ENCODE measurements at regions of chr6 and their contacts with region 1.

Region 1: DNA sequence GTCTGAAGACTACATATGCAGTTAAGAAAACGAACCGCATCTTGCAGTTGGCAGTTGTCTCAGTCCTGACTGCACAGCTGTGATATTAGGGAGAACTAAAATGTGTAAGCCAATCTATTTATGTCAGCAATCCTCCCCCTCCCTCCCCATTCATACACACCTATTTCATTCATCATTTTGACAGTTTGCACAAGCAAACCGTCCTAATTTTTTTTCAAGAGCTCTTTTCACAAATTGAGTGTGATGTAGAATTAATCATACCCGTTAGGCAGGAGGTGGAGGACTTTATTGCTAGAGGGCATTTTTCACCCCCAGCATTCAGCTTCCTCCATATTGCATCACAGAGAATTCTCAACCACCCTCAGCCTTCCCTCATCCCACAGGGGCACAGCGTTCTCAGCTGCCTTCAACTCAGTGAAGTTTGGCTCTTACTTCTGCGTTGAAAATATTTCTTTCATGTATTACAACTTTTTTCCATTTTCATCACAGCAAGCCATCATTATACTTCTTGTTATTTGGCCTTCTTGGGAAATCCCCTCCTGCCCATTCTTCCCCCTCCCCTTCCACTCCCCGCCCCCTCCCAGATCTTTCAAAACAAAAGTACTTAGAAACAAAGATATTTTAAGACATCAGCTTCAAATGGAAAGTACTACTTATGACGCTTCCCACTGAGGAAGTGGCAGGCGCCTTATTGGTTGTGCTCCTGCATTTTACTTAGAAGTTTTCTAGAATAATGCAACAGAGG is 37.5 kb downstream of the NOX3 start:
- DNase-seq: peak; percentile 34
- ATAC-seq: peak; percentile 78
- H3K4me3 Mint-ChIP-seq: peak overlapping the region; percentile 80
- H3K27ac Mint-ChIP-seq: peak overlapping the region; percentile 94
- H3K4me1 Mint-ChIP-seq: peaks cover 22% of the 10 kb centered on the region
- H3K27me3 Mint-ChIP-seq: no peaks in the 10 kb centered on the region

Region 2: DNA sequence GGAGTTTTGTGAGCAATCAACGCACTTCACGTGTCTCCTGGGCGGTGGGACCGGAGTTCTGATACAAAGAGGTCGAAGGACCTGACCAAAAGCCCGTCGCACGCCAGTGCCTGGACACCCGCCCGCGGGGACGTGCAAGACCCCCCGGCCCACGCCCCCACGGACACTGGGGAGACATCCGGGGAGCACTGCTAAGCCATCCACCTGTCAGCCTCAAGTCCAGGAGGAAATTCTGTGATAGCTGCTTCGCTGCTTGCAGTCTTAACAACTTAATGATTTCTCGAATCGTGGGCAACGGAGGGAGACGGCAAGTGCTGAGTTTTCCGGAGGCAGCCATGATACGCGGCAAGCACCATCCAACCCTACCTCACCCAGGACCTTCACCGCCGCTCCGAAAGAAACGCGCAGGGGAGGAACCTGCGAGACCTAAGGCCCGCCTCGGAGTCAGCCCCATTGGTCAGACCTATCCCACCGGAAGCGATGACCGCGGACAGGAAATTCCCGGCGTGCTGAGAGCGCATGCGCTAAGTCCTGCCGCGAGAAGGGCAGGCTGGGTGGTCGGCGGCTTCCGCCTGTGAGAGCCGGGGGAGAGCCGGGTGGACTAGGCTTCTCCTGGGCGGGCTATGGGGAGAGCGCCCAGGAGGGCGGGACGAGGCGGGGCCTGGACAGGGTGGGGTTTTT is 104.0 kb before region 1 on chr6 and contains the start of gene TFB1M:
- POLR2A ChIA-PET with region 1: interaction called, 10 read pairs
- DNase-seq: peak; percentile 98
- ATAC-seq: peak; percentile 96
- H3K4me3 Mint-ChIP-seq: peak within 1 kb of the TSS; percentile 99
- H3K27ac Mint-ChIP-seq: peak within 1 kb of the TSS; percentile 97
- H3K4me1 Mint-ChIP-seq: peaks cover 35% of the 10 kb centered on the region
- H3K27me3 Mint-ChIP-seq: peaks cover 3% of the 10 kb centered on the region
- total RNA-seq, gene TFB1M: 32.4 to 36.3 TPM